GM10248 (cell line): ENCODE measurements at regions of chr15 and their contacts with region 1.

Region 1: DNA sequence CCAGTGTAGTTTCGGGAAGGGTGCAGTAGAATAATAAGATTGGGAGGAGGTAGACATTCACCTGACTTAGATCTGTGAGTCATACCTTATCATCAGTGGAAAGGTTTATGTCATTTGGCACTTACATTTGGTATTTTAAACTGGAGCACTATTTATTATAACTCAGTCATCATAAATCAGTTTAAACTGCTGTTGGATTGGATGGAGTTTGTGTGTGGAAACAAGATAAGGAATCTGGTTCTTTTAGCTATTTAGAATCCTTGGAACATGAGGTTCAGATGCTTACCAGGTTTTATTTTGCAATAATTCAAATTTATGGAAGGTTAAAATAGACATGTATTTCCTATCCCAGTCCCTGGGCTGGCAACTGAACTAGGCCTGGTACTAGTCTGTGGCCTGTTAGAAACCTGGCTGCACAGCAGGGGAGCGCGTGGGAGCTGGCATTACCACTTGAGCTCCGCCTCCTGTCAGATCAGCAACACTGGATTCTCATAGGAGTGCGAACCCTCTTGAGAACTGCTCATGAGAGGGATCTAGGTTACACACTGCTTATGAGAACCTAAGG is 34.5 kb downstream of the ZFAND6 start:
- DNase-seq: no peak
- CTCF ChIP-seq: no peak

Region 2: DNA sequence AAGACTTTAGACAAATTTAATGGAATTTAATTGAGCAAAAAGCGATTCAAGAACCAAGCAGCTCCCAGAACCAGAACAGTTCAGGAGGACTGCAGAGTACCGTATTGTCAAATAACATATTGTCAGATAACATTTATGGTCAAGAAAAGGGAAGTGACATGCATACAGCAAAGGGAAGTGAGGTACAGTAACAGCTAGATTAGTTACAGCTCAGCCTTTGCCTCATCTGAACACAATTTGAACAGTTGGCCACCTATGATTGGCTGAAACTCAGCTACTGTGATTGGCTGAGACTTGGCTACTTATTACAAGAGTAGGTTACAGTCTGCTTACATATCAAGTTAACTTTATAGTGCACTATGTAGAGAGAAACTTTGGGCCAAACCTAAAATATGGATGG is 12.5 kb before region 1 on chr15:
- CTCF ChIA-PET with region 1: interaction called, 30 read pairs
- POLR2A ChIA-PET with region 1: interaction called, 3 read pairs
- DNase-seq: no peak
- CTCF ChIP-seq: no peak